ENCODE measurements at regions of chr5 and their contacts with region 1.

Region 1: GRCh38 chr5:141960449-141961202 is 2.6 kb upstream of the PCDH12 start:
- DNase-seq: peak; percentile 83 to 95 (median 86)
- ATAC-seq: peak; percentile 94
- H3K4me3 ChIP-seq: no peak overlapping the region
- H3K27ac ChIP-seq: peak overlapping the region; percentile 55
- H3K4me1 ChIP-seq: peaks cover 3 to 16% of the 10 kb centered on the region in 2 experiments
- H3K27me3 ChIP-seq: peaks cover 3 to 21% of the 10 kb centered on the region in 2 experiments; a peak in 3 of 5 replicates
- CTCF ChIP-seq: peak; percentile 90 to 95 (median 94)
- EP300 ChIP-seq: no peak
- POLR2A ChIP-seq: no peak
- RAD21 ChIP-seq: peak; percentile 86 to 91

Region 2: DNA sequence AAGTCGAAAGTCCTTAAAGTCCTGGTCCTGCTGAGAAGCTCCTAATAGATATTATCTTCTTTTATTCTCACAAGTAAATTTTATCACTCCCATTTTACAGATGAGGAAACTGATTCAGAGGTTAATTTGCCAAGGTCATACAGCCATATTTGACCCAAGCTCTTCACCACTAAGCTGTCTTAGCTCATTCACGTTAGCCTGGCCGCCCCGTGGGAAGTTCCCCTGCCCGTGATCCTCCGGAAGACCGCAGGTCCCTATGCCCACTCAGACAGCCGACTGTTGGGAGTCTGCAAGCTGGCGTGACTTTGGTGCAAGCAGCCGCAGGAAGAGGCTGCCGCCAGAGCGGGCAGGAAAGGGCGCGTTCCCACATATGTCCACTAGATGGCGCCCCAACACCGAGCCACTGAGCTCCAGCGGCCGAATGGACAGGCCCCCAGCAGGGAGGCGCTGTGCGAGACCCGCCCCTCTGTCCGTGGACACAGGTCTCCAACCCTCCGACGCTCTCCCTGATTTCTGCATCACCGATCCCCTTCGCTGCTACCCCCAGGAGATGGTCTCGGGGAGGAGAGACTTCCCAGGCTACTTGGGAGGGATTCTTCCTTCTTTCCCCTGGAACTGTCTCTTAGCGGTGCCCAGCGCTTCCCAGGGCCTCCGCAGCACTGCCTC is 268.6 kb before region 1 on chr5:
- CTCF ChIA-PET with region 1: interaction called, 9 read pairs
- POLR2A ChIA-PET with region 1: interaction called, 4 read pairs
- in situ Hi-C with region 1: loop called (anchors 5 kb)
- intact Hi-C with region 1: loop called (anchors 1 kb)
- DNase-seq: peak; percentile 84 to 90 (median 88)
- ATAC-seq: peak; percentile 89
- H3K4me3 ChIP-seq: peak overlapping the region; percentile 17
- H3K27ac ChIP-seq: peak overlapping the region; percentile 81
- H3K4me1 ChIP-seq: peaks cover 38 to 55% of the 10 kb centered on the region in 2 experiments
- H3K27me3 ChIP-seq: peaks cover 0 to 12% of the 10 kb centered on the region in 2 experiments; a peak in 3 of 5 replicates
- CTCF ChIP-seq: peak; percentile 97 to 99 (median 98)
- EP300 ChIP-seq: no peak
- POLR2A ChIP-seq: no peak
- RAD21 ChIP-seq: peak; percentile 94 to 95

Region 3: GRCh38 chr5:141889282-141889871 is 71.2 kb before region 1 on chr5:
- CTCF ChIA-PET with region 1: interaction called, 29 read pairs
- POLR2A ChIA-PET with region 1: interaction called, 3 read pairs
- in situ Hi-C with region 1: loop called (anchors 5 kb)
- intact Hi-C with region 1: loop called (anchors 1 kb)
- DNase-seq: peak in 2 of 4 experiments; percentile 29 to 30
- ATAC-seq: peak; percentile 82
- H3K4me3 ChIP-seq: no peak overlapping the region
- H3K27ac ChIP-seq: no peak overlapping the region
- H3K4me1 ChIP-seq: no peaks in the 10 kb centered on the region; a peak in 1 of 5 replicates
- H3K27me3 ChIP-seq: peaks cover 6 to 7% of the 10 kb centered on the region in 2 experiments
- CTCF ChIP-seq: peak; percentile 36 to 79 (median 54); a peak in 5 of 6 replicates
- EP300 ChIP-seq: no peak
- POLR2A ChIP-seq: no peak
- RAD21 ChIP-seq: peak; percentile 63 to 75

Region 4: GRCh38 chr5:141947316-141947715 is 13.3 kb before region 1 on chr5:
- CTCF ChIA-PET with region 1: no interaction called
- POLR2A ChIA-PET with region 1: interaction called, 11 read pairs
- in situ Hi-C with region 1: no loop called
- intact Hi-C with region 1: no loop called
- DNase-seq: no peak
- ATAC-seq: no peak
- H3K4me3 ChIP-seq: no peak overlapping the region
- H3K27ac ChIP-seq: no peak overlapping the region
- H3K4me1 ChIP-seq: peaks cover 0 to 7% of the 10 kb centered on the region in 2 experiments; a peak in 1 of 5 replicates
- H3K27me3 ChIP-seq: peaks cover 14 to 32% of the 10 kb centered on the region in 2 experiments; a peak in 3 of 5 replicates
- CTCF ChIP-seq: no peak
- EP300 ChIP-seq: no peak
- POLR2A ChIP-seq: no peak
- RAD21 ChIP-seq: no peak

Region 5: DNA sequence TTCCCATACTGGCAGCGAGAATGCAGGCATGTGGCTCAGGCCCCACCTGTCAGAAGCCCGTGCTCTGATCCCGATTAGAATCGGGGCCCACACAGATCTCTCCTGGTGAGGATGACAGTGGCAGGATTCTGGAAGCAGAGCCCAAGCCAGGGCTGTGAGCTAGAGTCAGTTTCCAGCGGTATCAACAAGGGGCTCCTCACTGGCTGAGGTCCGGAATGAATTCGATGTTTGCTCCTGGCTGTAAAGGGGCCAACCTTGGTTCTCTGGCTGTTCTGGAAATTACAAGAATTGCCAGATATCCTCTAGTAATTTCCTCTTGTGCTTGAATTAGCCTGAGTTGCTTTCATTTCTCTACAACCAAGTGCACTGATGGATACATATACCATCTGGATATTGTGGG is 493.3 kb after region 1 on chr5:
- CTCF ChIA-PET with region 1: no interaction called
- POLR2A ChIA-PET with region 1: no interaction called
- in situ Hi-C with region 1: no loop called
- intact Hi-C with region 1: no loop called
- DNase-seq: no peak
- ATAC-seq: no peak
- H3K4me3 ChIP-seq: no peak overlapping the region
- H3K27ac ChIP-seq: no peak overlapping the region
- H3K4me1 ChIP-seq: no peaks in the 10 kb centered on the region
- H3K27me3 ChIP-seq: no peaks in the 10 kb centered on the region
- CTCF ChIP-seq: no peak
- EP300 ChIP-seq: no peak
- POLR2A ChIP-seq: no peak
- RAD21 ChIP-seq: no peak